ENCODE measurements at regions of chr2 and their contacts with region 1.

Region 1: GRCh38 chr2:212147921-212148513 is 390.6 kb downstream of the ERBB4 start:
- DNase-seq: no peak
- ATAC-seq: no peak

Region 2: GRCh38 chr2:212536817-212537725 is 389.1 kb after region 1 on chr2:
- intact Hi-C with region 1: loop called in 1 of 2 experiments (anchors 5 kb)
- DNase-seq: peak; percentile 33
- ATAC-seq: peak; percentile 23 to 32

Measured in left cardiac atrium (tissue), 4 donors.